Panc1 (cell line): ENCODE measurements at regions of chr4 and their contacts with region 1.

Region 1: DNA sequence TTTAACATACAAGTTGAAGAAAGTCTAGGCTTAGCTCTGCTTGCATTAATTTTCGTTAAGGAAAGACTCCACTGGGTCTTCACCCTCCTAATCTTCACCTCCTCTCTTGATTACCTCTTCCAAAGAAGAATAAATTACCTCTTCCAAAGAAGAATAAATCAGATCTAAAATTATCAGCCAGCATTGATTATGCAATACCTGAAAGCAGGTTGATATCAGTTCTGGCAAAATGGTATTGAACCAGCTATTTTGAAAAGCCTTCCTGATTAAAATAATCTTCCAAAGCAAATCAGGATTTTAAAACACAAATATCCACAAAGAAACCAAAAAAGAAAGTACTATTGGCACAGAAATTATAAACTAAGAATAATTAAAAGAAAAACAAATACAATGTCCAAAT is 36.9 kb downstream of the CDKL2 start:
- DNase-seq: no peak
- ATAC-seq: no peak
- H3K4me3 ChIP-seq: no peak overlapping the region
- H3K27ac ChIP-seq: no peak overlapping the region
- H3K4me1 ChIP-seq: no peaks in the 10 kb centered on the region
- H3K27me3 ChIP-seq: no peaks in the 10 kb centered on the region
- CTCF ChIP-seq: no peak

Region 2: DNA sequence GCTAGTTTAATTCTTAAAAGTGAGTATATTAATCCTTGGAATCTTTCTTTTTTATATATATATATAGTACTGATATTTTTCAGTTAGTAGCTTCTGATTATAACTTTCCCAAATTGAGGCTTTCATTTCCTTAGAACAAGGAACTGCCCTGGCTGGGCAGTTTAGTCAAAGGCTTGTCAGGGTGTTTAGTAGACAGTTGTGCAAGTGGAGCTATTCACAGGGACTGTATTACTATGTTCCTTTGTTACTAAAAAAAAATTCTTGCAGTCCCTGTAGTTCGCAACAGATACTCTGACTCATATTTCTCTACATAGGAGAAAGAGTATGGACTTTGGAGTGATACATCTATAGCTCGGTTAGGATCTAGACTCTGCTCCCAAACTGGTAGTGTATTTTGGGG is 151.8 kb after region 1 on chr4:
- CTCF ChIA-PET with region 1: no interaction called
- POLR2A ChIA-PET with region 1: interaction called, 11 read pairs
- in situ Hi-C with region 1: no loop called
- intact Hi-C with region 1: no loop called
- DNase-seq: no peak
- ATAC-seq: no peak
- H3K4me3 ChIP-seq: no peak overlapping the region
- H3K27ac ChIP-seq: no peak overlapping the region
- H3K4me1 ChIP-seq: no peaks in the 10 kb centered on the region; the same call in 1 of the 2 replicates
- H3K27me3 ChIP-seq: no peaks in the 10 kb centered on the region
- CTCF ChIP-seq: no peak

Region 3: DNA sequence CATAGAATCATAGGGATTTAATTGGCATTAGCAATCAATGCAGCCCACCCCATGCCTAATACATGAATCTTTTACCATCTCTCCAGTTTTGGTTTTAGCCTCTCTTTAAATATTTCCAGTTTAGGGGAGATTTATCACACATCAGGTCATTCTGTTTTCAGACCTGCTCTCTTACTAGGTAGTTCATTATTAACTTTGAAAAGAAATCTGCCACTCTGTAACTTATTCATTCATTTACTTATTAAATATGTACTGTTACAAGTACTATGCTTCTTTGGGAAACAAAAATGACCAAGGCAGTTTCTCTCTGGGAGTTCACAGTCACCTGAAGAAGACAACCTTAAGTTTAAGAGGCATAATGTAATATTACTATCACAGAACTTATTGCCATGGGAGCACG is 193.1 kb after region 1 on chr4:
- CTCF ChIA-PET with region 1: no interaction called
- POLR2A ChIA-PET with region 1: no interaction called
- in situ Hi-C with region 1: no loop called
- intact Hi-C with region 1: no loop called
- DNase-seq: no peak
- ATAC-seq: no peak
- H3K4me3 ChIP-seq: no peak overlapping the region
- H3K27ac ChIP-seq: no peak overlapping the region
- H3K4me1 ChIP-seq: no peaks in the 10 kb centered on the region
- H3K27me3 ChIP-seq: no peaks in the 10 kb centered on the region
- CTCF ChIP-seq: no peak